Endothelial cell of umbilical vein (primary cell): ENCODE measurements at regions of chr11 and their contacts with region 1.

Region 1: GRCh38 chr11:46916286-46917108 is 1.9 kb downstream of the LRP4 start:
- DNase-seq: peak; percentile 57
- H3K4me3 ChIP-seq: peak overlapping the region; percentile 47 to 72 (median 60)
- H3K27ac ChIP-seq: no peak overlapping the region
- H3K4me1 ChIP-seq: peaks cover 19% of the 10 kb centered on the region
- H3K27me3 ChIP-seq: peaks cover 20 to 26% of the 10 kb centered on the region in 2 experiments
- CTCF ChIP-seq: peak in 1 of 2 donors; percentile 25
- POLR2A ChIP-seq: no peak

Region 2: DNA sequence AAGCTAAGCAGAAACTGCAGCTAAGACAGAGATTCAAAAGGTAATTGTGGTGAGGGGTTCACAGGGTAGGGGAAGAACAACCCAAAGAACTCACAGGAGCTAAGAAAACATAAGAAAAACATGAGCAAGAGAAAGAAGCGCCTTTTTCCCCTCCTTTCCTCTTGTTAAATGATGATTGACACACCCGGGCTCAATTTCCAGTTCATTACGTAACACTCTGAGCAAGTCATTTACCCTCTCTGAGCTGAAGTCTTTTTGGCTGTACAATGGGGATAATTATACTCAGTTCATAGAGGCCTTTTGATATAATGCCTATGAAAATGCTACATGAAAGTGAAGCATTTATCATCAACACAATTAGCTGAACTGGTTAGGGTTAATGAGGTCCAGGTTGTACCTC is 15.3 kb before region 1 on chr11:
- CTCF ChIA-PET with region 1: interaction called, 16 read pairs
- POLR2A ChIA-PET with region 1: no interaction called
- dilution Hi-C with region 1: no loop called
- intact Hi-C with region 1: no loop called
- DNase-seq: no peak
- H3K4me3 ChIP-seq: no peak overlapping the region
- H3K27ac ChIP-seq: no peak overlapping the region
- H3K4me1 ChIP-seq: no peaks in the 10 kb centered on the region
- H3K27me3 ChIP-seq: no peaks in the 10 kb centered on the region
- CTCF ChIP-seq: no peak
- POLR2A ChIP-seq: no peak